ENCODE measurements at regions of chr19 and their contacts with region 1.

Region 1: GRCh38 chr19:40529093-40529954 is 47.3 kb upstream of the SHKBP1 start:
- DNase-seq: peak; percentile 92
- ATAC-seq: peak; percentile 90

Region 2: DNA sequence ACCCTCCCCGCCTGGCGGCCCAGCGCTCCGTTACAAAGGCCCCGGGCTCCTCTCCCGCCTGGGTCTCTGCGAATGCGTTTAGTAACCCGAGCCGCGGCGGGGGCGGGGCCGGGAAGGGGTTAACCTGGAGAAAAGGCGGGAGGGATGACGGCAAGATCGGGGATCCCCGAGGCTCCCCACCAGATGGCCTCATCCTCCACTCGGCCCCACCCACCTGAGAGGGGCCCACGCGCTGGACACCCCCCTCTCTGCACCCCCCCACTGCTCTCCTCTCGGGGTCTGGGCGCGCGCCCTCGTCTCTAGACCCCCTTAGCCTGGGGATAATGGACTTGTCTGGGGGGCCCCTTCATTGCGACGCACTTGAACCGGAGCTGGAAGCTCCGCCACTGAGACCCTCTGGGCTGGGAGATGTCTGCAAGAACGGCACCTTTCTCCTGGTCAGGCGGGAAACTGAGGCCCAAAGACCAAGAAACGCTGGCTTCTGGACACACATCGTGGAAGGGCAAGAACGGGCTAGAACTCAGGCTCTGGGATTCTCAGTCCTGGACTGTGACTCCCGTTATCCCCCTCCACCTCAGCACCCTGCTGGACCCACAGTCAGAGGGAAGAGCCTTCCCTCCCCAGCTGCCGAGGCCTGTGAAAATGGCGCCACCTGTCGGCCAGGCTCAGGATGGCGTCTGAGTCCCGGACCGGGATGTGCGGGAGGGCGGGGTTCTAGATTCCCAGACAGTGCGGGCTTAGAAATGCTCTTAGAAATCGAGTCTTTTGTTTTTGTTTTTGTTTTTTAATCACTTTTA is 69.0 kb after region 1 on chr19:
- intact Hi-C with region 1: loop called (anchors 10 kb)
- DNase-seq: peak; percentile 94
- ATAC-seq: peak; percentile 71

Region 3: DNA sequence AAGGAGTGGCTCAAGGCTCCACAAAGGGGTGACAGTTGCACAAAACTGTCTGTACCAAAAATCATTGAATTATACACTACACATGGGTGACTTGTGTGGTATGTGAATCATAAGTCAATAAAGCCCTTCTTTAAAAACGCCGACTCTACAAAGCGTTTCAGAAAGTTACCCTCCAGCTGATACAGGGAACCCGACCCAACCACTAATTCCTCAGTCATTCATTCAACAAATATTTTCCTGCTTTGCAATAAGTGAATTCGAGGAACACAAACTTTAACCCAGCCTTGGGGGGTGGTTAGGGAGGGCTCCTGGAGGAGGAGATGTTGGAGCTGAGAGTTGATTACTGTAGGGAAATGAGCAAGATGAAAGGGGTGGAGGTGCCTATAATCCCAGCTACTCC is 103.9 kb after region 1 on chr19:
- intact Hi-C with region 1: loop called (anchors 10 kb)
- DNase-seq: no peak
- ATAC-seq: no peak

Measured in sciatic nerve (tissue), 2 donors.